ENCODE measurements at regions of chr2 and their contacts with region 1.

Region 1: DNA sequence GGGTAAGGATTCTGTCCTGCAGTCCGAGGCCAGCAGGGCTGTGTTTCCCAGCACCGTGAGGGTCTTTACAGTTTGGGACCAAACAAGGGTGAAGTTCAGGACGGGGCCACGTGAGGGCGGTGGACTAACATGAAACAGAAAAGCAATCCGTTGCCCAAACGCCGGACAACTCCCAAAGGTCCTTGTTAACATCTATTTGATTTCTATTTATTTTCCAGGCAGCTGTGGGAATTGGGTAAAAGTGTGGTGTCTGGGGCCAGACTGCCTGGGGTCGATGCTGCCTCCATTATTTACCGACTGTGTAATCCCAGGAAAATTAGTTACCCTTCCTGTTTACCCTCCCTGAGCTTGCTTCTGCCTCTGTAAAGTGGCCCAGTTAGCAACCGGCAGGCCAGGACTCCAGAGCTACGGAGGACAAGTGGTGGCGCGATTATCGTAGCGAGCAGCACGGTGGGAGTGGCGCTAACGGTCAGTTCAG is 66.3 kb upstream of the TCF7L1 start:
- DNase-seq: peak; percentile 83

Region 2: GRCh38 chr2:85286918-85287317 is 220.0 kb after region 1 on chr2:
- CTCF ChIA-PET with region 1: interaction called, 36 read pairs
- POLR2A ChIA-PET with region 1: no interaction called
- DNase-seq: no peak

Region 3: GRCh38 chr2:85302121-85302520 is 235.2 kb after region 1 on chr2:
- CTCF ChIA-PET with region 1: interaction called, 45 read pairs
- POLR2A ChIA-PET with region 1: interaction called, 3 read pairs
- DNase-seq: no peak

Measured in HEK293T (cell line).